HepG2 (cell line): ENCODE measurements at regions of chr14 and their contacts with region 1.

Region 1: GRCh38 chr14:104650057-104650981 is 39.1 kb upstream of the INF2 start:
- DNase-seq: peak; percentile 37
- ATAC-seq: peak; percentile 81
- H3K4me3 ChIP-seq: peak overlapping the region; percentile 19 to 70 (median 60); a peak in 4 of 6 replicates
- H3K27ac ChIP-seq: no peak overlapping the region
- H3K4me1 ChIP-seq: peaks cover 46% of the 10 kb centered on the region
- H3K27me3 ChIP-seq: peaks cover 2 to 19% of the 10 kb centered on the region in 2 experiments; a peak in 3 of 5 replicates
- CTCF ChIP-seq: peak; percentile 99
- EP300 ChIP-seq: no peak
- POLR2A ChIP-seq: no peak
- RAD21 ChIP-seq: peak; percentile 80

Region 2: DNA sequence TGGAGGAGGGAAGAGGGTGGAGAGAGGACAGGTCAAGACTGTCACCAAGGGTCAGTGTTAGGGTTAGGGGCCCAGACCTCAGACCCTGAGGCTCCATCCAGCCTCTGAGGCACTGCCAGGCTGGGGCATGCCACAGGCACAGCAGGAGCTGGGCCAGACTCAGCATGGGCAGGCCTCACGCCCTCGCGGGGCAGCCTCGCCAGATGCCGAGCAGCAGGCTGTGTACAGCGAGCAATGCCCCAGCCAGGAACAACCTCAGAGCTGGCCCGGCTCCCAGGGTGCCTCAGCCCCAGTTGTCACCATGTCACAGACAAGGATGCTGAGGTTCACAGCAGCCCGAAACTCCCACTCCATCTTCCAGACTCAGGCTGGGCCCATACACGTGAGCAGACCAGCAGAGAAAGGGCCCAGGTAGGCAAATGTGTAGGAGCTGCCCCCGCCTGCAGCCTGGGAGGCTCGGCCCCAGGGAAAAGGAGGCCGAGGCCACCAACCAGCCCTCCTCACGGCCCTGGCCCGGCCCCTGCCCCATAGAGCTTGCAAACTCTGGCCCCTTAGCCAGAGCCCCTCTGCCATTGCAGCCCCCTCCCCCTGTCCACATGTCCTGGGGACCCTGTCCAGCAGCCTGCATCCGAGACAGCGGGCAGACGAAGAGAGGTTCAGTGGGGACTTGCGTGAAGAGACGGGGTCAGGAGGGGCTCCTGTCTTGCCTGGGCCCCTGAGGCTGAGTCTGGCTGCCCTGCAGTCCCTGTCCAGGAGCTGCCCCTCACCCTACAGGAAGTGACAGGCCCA is 63.3 kb before region 1 on chr14:
- CTCF ChIA-PET with region 1: no interaction called
- POLR2A ChIA-PET with region 1: no interaction called
- in situ Hi-C with region 1: no loop called
- intact Hi-C with region 1: no loop called
- DNase-seq: no peak
- ATAC-seq: peak; percentile 24; the same call in 2 of the 3 replicates
- H3K4me3 ChIP-seq: no peak overlapping the region
- H3K27ac ChIP-seq: no peak overlapping the region
- H3K4me1 ChIP-seq: no peaks in the 10 kb centered on the region
- H3K27me3 ChIP-seq: peaks cover 26 to 92% of the 10 kb centered on the region in 2 experiments
- CTCF ChIP-seq: no peak
- EP300 ChIP-seq: no peak
- POLR2A ChIP-seq: no peak
- RAD21 ChIP-seq: no peak

Region 3: DNA sequence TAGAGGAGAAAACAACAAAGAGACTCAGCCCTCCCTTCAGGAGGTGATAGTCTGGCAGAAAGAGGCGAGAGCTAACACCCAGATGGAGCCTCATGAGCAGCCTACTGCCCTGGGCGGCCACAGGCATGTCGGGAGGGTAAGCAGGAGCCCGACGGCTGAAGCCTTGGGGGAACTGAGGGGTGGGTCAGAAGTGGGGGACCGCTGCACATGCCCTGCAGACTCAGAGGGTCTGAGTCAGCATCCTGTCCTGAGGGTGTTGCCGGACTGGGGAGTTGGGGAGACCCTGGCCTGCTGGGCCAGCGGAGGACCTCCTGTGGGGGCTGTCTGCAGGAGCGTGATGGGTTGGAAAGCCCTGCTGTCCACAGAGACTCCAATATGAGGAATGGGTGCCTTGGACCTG is 23.2 kb after region 1 on chr14:
- CTCF ChIA-PET with region 1: no interaction called
- POLR2A ChIA-PET with region 1: no interaction called
- in situ Hi-C with region 1: no loop called
- intact Hi-C with region 1: no loop called
- DNase-seq: no peak
- ATAC-seq: no peak
- H3K4me3 ChIP-seq: no peak overlapping the region
- H3K27ac ChIP-seq: no peak overlapping the region
- H3K4me1 ChIP-seq: peaks cover 29% of the 10 kb centered on the region
- H3K27me3 ChIP-seq: peaks cover 0 to 1% of the 10 kb centered on the region in 2 experiments; a peak in 2 of 5 replicates
- CTCF ChIP-seq: no peak
- EP300 ChIP-seq: no peak
- POLR2A ChIP-seq: no peak
- RAD21 ChIP-seq: no peak

Region 4: DNA sequence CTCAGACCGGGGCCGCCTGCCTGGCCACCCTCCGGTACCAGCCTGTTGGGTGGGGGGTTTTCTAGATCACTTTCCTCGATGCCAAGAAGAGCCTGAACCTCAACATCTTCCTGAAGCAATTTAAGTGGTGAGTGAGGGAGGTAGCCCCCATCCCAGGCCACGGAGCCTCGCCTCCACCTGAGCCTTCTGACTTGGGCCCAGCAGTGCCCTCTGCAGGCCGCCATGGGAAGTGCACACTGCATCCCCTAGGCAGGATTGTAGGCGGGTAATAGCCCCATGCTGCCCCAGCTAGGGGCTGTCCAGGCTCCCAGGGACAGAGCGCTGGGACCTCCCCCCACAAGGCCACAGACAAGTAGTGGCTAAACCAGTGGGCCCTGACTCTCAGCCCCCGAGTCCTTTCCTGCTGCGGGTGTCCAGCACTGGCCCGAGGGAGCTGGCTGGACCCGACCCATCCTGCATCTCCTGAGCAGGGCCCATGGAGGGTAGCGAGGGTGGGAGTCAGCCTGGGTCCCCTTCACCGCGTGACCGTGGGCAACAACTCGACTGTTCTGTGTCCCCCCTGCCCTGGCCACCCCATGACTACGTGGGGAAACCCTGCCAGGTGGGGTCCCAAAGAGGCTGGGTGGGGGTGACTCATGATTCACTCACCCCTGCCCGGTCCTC is 58.4 kb after region 1 on chr14:
- CTCF ChIA-PET with region 1: interaction called, 31 read pairs
- POLR2A ChIA-PET with region 1: no interaction called
- in situ Hi-C with region 1: loop called (anchors 5 kb)
- intact Hi-C with region 1: loop called (anchors 1 kb)
- DNase-seq: peak; percentile 35
- ATAC-seq: peak; percentile 75
- H3K4me3 ChIP-seq: no peak overlapping the region
- H3K27ac ChIP-seq: no peak overlapping the region
- H3K4me1 ChIP-seq: no peaks in the 10 kb centered on the region
- H3K27me3 ChIP-seq: no peaks in the 10 kb centered on the region
- CTCF ChIP-seq: peak; percentile 97
- EP300 ChIP-seq: no peak
- POLR2A ChIP-seq: no peak
- RAD21 ChIP-seq: peak; percentile 80

Region 5: DNA sequence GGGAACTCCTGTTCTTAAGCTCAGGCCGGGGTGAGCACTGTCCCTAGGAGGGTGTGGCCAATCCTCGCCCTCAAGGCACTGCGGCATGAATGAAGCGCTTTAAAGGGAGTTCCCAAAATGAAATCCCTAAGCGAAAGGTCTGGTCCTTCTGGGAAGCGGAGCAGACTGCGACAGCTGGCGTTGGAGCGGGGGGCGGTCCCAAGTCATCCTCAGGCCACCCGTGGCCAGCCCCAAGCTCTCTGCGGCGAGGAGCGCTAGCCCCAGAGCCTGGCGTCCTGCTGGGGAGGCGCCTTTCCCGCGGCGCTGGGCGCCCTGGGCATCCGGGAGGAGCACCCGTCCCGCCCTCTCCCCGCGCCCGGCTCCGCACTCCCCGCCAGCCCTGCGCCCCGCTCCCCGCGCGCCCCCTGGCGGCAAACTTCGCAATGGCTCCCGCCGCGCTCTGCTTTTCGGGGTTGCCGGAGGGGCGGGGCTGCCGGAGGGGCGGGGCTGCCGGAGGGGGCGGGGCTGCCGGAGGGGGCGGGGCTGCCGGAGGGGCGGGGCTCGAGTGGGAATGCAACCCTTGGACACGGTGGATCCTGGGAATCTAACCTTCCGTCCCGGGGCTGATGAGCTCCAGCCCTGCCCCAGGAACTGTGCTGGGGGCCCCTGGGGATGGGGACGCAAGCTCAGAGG is 176.0 kb after region 1 on chr14:
- CTCF ChIA-PET with region 1: no interaction called
- POLR2A ChIA-PET with region 1: no interaction called
- in situ Hi-C with region 1: loop called (anchors 10 kb)
- intact Hi-C with region 1: no loop called
- DNase-seq: peak; percentile 65
- ATAC-seq: peak; percentile 75
- H3K4me3 ChIP-seq: peak overlapping the region; percentile 66 to 82 (median 77)
- H3K27ac ChIP-seq: peak overlapping the region; percentile 56
- H3K4me1 ChIP-seq: peaks cover 29% of the 10 kb centered on the region
- H3K27me3 ChIP-seq: no peaks in the 10 kb centered on the region; a peak in 1 of 5 replicates
- CTCF ChIP-seq: peak; percentile 83
- EP300 ChIP-seq: no peak
- POLR2A ChIP-seq: peak in 1 of 2 experiments; percentile 72; a peak in 2 of 4 replicates
- RAD21 ChIP-seq: peak; percentile 40; the same call in 1 of the 2 replicates